ENCODE measurements at regions of chr1 and their contacts with region 1.

Region 1: DNA sequence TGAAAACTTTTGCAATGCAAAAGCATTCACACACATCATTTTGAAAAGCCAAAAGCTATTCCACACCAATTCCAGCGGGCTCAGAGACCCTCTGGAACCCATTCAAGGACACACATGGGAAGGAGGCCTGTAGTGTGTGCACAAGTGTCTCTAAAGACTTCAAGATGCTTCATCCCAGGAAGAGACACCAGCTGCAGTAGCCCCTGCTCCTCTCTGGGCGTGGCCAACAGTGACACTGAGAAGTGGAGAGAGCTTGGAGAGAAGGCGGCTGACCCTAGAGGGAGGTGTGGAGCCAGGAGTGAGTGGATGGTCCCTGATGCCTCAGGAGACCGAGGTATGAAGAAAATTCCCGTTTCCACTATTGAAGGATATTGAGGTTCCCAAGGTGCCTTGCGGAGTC is 14.9 kb upstream of the TNNI1 start:
- DNase-seq: no peak
- H3K4me3 ChIP-seq: no peak overlapping the region
- H3K27ac ChIP-seq: no peak overlapping the region
- H3K27me3 ChIP-seq: peaks cover 4% of the 10 kb centered on the region
- CTCF ChIP-seq: peak; percentile 36

Region 2: DNA sequence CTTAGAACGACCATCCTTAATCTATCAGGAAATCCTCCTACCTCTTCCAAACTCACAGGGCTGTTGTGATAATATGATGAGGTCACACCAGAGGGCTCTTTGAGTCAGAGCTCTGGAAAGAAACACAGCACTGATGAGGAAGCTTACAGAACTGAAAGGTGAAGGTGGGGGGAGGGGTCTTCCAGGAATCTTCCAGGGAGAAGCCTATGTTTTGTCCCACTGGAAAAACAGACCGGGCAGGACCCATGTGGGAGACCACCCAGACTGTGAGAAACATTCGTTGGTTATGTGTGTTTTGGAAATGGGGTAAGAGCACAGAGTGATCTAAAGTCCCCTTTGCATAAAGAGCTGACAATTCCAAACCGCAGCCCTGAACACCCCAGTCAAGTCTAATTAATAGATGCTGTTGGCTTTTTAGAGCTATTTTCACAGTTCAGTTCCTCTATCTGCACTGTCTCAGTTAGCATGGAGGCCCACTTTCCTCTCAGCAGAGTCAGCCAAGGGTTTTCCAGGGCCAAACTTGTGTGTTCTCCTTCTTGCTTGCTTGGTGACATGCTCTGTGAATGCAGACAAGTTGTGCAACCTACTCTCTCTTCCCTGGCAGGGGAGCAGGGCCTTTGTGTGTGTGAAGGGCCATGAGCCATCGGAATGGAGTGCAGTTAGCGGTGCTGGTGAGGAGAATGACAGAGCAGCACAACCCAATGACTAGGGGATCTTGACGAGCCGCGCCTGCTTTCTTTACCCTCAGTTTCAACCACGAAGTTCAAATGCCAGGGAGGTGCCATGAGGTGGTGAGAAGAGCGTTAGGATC is 20.3 kb after region 1 on chr1:
- CTCF ChIA-PET with region 1: interaction called, 16 read pairs
- POLR2A ChIA-PET with region 1: interaction called, 22 read pairs
- DNase-seq: peak; percentile 88
- H3K4me3 ChIP-seq: no peak overlapping the region; the same call in 1 of the 2 replicates
- H3K27ac ChIP-seq: peak overlapping the region; percentile 95
- H3K27me3 ChIP-seq: no peaks in the 10 kb centered on the region
- CTCF ChIP-seq: no peak

Region 3: GRCh38 chr1:201481761-201482493 is 45.5 kb after region 1 on chr1:
- CTCF ChIA-PET with region 1: interaction called, 12 read pairs
- POLR2A ChIA-PET with region 1: interaction called, 5 read pairs
- DNase-seq: no peak
- H3K4me3 ChIP-seq: no peak overlapping the region
- H3K27ac ChIP-seq: no peak overlapping the region
- H3K27me3 ChIP-seq: no peaks in the 10 kb centered on the region
- CTCF ChIP-seq: peak; percentile 82

Measured in AG04450 (cell line).